CD4-positive, alpha-beta memory T cell (primary cell): ENCODE measurements at regions of chr2 and their contacts with region 1.

Region 1: DNA sequence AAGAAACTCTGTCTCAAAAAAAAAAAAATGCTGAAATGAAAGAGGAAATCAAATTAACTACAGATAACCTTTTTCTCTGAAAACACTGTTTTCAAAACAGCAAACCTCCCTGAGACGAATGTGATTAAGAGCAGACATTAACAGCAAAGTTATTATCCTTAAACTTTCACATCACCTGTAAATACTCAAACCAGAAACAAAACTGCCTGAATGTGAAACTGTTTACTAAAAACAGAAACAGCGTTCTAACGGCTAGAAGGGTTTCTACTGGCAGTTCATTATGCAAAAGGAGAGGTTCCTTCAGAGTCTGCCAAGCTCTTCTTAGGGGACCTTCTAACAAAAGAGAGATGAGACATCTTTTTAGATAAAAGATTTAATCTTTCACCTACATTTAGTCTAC is 45.9 kb downstream of the PNO1 start:
- DNase-seq: peak in 3 of 5 donors; percentile 19 to 35 (median 27)
- H3K4me3 ChIP-seq: peak overlapping the region in 1 of 2 donors; percentile 20
- H3K4me3 Mint-ChIP-seq: peak overlapping the region; percentile 70 to 92 (median 82)
- H3K27ac ChIP-seq: peak overlapping the region; percentile 45
- H3K27ac Mint-ChIP-seq: peak overlapping the region; percentile 84 to 92 (median 90)
- H3K4me1 ChIP-seq: peaks cover 83% of the 10 kb centered on the region
- H3K4me1 Mint-ChIP-seq: peaks cover 54 to 84% (median 69%) of the 10 kb centered on the region in 4 donors
- H3K27me3 ChIP-seq: no peaks in the 10 kb centered on the region
- H3K27me3 Mint-ChIP-seq: no peaks in the 10 kb centered on the region

Region 2: GRCh38 chr2:68216454-68217310 is 13.1 kb after region 1 on chr2:
- CTCF ChIA-PET with region 1: interaction called, 5 read pairs
- POLR2A ChIA-PET with region 1: interaction called, 3 read pairs
- intact Hi-C with region 1: loop called (anchors 2 kb)
- DNase-seq: no peak
- H3K4me3 ChIP-seq: no peak overlapping the region
- H3K4me3 Mint-ChIP-seq: peak overlapping the region in 1 of 8 donors; percentile 73
- H3K27ac ChIP-seq: no peak overlapping the region
- H3K27ac Mint-ChIP-seq: peak overlapping the region in 5 of 7 donors; percentile 9 to 77 (median 28)
- H3K4me1 ChIP-seq: peaks cover 77% of the 10 kb centered on the region
- H3K4me1 Mint-ChIP-seq: peaks cover 51 to 90% (median 71%) of the 10 kb centered on the region in 4 donors
- H3K27me3 ChIP-seq: no peaks in the 10 kb centered on the region
- H3K27me3 Mint-ChIP-seq: no peaks in the 10 kb centered on the region